ENCODE measurements at regions of chr3 and their contacts with region 1.

Region 1: GRCh38 chr3:32296256-32297204 is 58.0 kb downstream of the CMTM8 start:
- DNase-seq: peak; percentile 75
- H3K4me3 ChIP-seq: no peak overlapping the region
- H3K27ac ChIP-seq: no peak overlapping the region
- H3K4me1 ChIP-seq: peaks cover 14% of the 10 kb centered on the region
- H3K27me3 ChIP-seq: no peaks in the 10 kb centered on the region
- CTCF ChIP-seq: peak; percentile 85 to 95

Region 2: GRCh38 chr3:32238453-32239306 is 57.9 kb before region 1 on chr3 and contains the start of gene CMTM8:
- CTCF ChIA-PET with region 1: no interaction called
- dilution Hi-C with region 1: no loop called
- in situ Hi-C with region 1: no loop called
- intact Hi-C with region 1: loop called (anchors 1 kb)
- DNase-seq: peak; percentile 57
- H3K4me3 ChIP-seq: peak within 1 kb of the TSS; percentile 61 to 74 (median 72)
- H3K27ac ChIP-seq: no peak within 1 kb of the TSS
- H3K4me1 ChIP-seq: peaks cover 11% of the 10 kb centered on the region
- H3K27me3 ChIP-seq: no peaks in the 10 kb centered on the region
- CTCF ChIP-seq: no peak
- total RNA-seq, gene CMTM8: 0.67 to 2.9 TPM

Region 3: DNA sequence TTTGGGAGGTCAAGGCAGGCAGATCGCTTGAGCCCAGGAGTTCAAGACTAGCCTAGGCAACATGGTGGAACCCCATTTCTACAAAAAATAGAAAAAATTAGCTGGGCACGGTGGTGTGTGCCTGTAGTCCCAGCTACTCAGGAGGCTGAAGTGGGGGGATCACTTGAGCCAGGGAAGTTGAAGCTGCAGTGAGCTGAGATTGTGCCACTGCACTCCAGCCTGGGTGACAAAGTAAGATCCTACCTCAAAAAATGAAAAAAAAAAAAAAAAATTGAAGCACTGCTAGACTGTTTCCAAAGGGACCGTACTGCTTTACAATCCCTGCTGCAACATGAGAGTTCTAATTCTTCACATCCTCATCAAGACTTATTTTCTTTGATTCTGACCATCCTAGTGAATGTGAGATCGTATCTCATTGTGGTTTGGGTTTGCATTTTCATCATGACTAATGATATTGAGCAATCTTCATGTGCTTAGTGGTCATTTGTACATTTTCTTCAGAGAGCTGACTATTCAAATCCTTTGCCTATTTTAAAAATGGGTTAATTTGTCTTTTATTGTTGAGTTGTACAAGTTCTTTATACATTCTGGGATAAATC is 47.2 kb before region 1 on chr3:
- CTCF ChIA-PET with region 1: no interaction called
- dilution Hi-C with region 1: no loop called
- in situ Hi-C with region 1: no loop called
- intact Hi-C with region 1: loop called (anchors 1 kb)
- DNase-seq: peak; percentile 95
- H3K4me3 ChIP-seq: no peak overlapping the region
- H3K27ac ChIP-seq: peak overlapping the region; percentile 39
- H3K4me1 ChIP-seq: peaks cover 19% of the 10 kb centered on the region
- H3K27me3 ChIP-seq: no peaks in the 10 kb centered on the region
- CTCF ChIP-seq: no peak

Region 4: GRCh38 chr3:32334675-32335074 is 38.1 kb after region 1 on chr3:
- CTCF ChIA-PET with region 1: no interaction called
- dilution Hi-C with region 1: no loop called
- in situ Hi-C with region 1: no loop called
- intact Hi-C with region 1: loop called (anchors 1 kb)
- DNase-seq: no peak
- H3K4me3 ChIP-seq: no peak overlapping the region
- H3K27ac ChIP-seq: no peak overlapping the region
- H3K4me1 ChIP-seq: no peaks in the 10 kb centered on the region
- H3K27me3 ChIP-seq: no peaks in the 10 kb centered on the region
- CTCF ChIP-seq: peak; percentile 26 to 64

Region 5: DNA sequence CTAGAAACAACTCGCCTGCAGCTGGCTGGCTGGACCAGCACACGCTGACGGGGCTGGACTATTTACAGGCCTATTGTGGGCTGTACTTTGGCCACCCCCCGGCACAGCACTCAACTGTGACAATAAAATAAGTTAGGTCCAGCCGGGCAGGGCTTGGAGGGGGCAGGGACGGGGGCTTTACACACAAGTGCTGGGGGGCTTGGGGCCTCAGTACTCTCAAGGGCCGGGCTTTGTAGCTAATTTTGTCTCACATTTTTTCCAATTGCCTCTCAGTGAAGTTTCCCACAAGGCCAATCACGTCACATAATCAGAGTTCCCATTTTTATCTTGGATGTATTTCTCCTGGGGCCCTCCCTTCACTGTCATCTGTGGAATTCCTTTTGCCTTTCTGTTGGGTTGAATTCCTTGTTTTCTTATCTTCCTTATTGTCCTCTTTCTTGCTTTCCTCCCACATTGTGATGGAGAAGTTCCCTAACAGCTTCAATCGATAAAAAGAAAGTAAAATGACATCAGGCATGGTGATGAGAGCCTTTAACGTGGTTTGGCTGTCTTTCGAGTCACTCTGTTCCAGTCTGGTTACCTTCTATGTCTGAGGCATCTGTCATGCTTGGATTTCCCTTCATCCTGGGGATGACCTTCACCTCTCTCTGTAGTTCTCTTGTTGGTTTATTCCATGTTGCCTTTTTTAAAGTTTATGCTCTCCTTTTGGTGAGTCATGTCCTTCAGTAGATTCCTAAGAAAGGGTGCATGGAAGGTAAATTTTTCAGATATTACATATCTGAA is 51.0 kb after region 1 on chr3:
- CTCF ChIA-PET with region 1: no interaction called
- dilution Hi-C with region 1: no loop called
- in situ Hi-C with region 1: no loop called
- intact Hi-C with region 1: no loop called
- DNase-seq: no peak
- H3K4me3 ChIP-seq: no peak overlapping the region
- H3K27ac ChIP-seq: no peak overlapping the region
- H3K4me1 ChIP-seq: no peaks in the 10 kb centered on the region
- H3K27me3 ChIP-seq: no peaks in the 10 kb centered on the region
- CTCF ChIP-seq: no peak

Region 6: DNA sequence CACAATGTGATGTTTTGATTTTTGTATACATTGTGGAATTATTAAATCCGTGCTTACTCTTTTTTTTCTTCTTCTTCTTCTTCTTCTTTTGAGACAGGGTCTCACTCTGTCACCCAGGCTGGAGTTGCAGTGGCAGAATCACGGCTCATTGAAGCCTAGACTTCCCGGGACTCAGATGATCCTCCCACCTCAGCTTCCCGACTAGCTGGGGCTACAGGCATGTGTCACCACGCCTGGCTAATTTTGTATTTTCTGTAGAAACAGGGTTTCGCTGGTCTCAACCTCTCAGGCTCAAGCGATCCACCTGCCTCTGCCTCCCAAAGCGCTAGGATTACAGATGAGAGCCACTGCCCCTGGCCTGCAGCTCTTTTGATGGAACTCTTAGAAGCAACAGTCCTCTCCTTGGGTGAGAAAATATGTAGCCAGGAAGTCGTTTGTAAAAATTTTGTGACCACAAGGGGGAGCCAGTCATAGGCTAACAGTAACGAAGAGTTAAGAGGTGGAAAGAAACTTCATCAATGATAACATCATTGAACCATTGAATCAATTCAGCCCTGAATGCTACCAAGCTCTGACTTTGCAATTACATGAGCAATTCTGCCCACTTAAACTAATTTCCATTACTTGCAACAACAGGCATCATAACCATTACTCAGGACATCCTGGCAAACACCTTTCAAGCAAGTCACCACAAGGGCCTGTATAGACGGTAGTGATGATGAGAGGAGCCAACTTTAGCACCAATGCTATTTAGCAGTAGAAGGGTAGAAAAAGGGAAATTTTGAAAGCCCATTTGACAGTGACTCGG is 78.5 kb after region 1 on chr3:
- CTCF ChIA-PET with region 1: no interaction called
- dilution Hi-C with region 1: no loop called
- in situ Hi-C with region 1: no loop called
- intact Hi-C with region 1: loop called (anchors 2 kb)
- DNase-seq: peak; percentile 66
- H3K4me3 ChIP-seq: no peak overlapping the region
- H3K27ac ChIP-seq: no peak overlapping the region
- H3K4me1 ChIP-seq: peaks cover 10% of the 10 kb centered on the region
- H3K27me3 ChIP-seq: no peaks in the 10 kb centered on the region
- CTCF ChIP-seq: peak; percentile 50 to 68